ENCODE measurements at regions of chrX and their contacts with region 1.

Region 1: GRCh38 chrX:18203631-18204030 is 17.1 kb downstream of the BEND2 start:
- DNase-seq: no peak
- ATAC-seq: no peak
- H3K4me3 ChIP-seq: no peak overlapping the region
- H3K27ac ChIP-seq: no peak overlapping the region
- H3K4me1 ChIP-seq: no peaks in the 10 kb centered on the region
- H3K27me3 ChIP-seq: peaks cover 0 to 3% (median 0%) of the 10 kb centered on the region in 9 donors
- CTCF ChIP-seq: no peak
- POLR2A ChIP-seq: no peak

Region 2: DNA sequence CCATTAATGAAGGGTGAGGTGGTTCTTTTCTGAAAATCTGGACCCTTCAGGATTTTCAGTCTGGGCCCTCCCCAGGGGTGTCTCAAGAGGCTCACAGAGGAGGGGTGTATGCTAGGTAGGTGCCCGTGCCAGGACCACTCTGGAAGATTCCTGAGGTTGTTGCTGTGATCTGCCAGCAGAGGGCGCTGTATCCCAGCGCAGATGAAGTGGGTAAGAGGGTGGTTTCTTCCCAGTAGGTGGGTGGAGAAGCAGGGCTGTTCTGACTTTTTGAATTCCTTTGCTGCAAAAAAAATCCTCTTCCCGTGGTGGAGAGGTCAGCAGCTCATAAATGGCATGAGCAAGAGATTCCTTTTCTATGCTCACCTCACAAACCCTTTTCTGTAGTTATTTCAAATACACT is 415.2 kb before region 1 on chrX:
- intact Hi-C with region 1: loop called in 2 of 10 experiments (anchors 5 kb)
- DNase-seq: peak in 3 of 5 donors; percentile 17 to 39 (median 38)
- ATAC-seq: peak in 3 of 4 donors; percentile 61 to 75 (median 71)
- H3K4me3 ChIP-seq: no peak overlapping the region
- H3K27ac ChIP-seq: no peak overlapping the region
- H3K4me1 ChIP-seq: peaks cover 0 to 4% (median 0%) of the 10 kb centered on the region in 12 donors
- H3K27me3 ChIP-seq: peaks cover 0 to 14% (median 0%) of the 10 kb centered on the region in 9 donors
- CTCF ChIP-seq: peak; percentile 65 to 83 (median 70)
- POLR2A ChIP-seq: no peak

Region 3: GRCh38 chrX:17944833-17945497 is 258.7 kb before region 1 on chrX:
- intact Hi-C with region 1: loop called in 1 of 10 experiments (anchors 10 kb)
- DNase-seq: no peak
- ATAC-seq: no peak
- H3K4me3 ChIP-seq: no peak overlapping the region
- H3K27ac ChIP-seq: no peak overlapping the region
- H3K4me1 ChIP-seq: no peaks in the 10 kb centered on the region
- H3K27me3 ChIP-seq: peaks cover 0 to 14% (median 0%) of the 10 kb centered on the region in 9 donors
- CTCF ChIP-seq: peak in 10 of 12 donors; percentile 7 to 47 (median 34)
- POLR2A ChIP-seq: no peak